Dorsolateral prefrontal cortex (tissue), 120 donors: ENCODE measurements at regions of chr5 and their contacts with region 1.

Region 1: DNA sequence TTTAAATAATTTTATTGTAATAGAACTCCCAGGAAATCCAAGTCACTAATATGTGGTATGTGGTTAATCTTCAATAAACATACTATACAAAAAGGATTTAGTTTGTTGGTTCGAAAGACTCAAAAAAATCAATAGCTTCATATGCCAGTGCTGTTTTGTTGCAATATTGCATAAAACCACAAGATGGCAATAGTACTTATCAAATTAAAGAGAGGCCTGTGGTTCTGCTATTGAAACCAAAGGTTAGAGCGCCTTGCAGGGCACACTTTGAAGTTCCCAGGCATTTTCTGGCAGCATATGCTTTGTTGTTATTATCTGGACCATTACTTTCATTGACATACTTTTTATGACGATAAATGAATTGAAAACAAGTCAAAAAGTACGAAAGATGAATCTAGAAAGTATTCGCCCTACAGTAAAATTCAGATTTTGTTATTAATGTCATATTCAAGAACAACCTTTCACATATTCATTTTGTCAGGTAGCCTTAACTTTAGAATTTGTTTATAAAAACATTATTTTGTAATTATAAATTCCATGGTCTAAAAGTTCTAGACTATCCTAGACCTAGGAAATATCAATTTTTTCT is 316.3 kb downstream of the MCTP1 start:
- DNase-seq: peak in 1 of 10 donors; percentile 23
- H3K4me3 ChIP-seq: no peak overlapping the region
- H3K27ac ChIP-seq: no peak overlapping the region
- H3K27me3 ChIP-seq: no peaks in the 10 kb centered on the region
- CTCF ChIP-seq: peak; percentile 63 to 93 (median 80)

Region 2: DNA sequence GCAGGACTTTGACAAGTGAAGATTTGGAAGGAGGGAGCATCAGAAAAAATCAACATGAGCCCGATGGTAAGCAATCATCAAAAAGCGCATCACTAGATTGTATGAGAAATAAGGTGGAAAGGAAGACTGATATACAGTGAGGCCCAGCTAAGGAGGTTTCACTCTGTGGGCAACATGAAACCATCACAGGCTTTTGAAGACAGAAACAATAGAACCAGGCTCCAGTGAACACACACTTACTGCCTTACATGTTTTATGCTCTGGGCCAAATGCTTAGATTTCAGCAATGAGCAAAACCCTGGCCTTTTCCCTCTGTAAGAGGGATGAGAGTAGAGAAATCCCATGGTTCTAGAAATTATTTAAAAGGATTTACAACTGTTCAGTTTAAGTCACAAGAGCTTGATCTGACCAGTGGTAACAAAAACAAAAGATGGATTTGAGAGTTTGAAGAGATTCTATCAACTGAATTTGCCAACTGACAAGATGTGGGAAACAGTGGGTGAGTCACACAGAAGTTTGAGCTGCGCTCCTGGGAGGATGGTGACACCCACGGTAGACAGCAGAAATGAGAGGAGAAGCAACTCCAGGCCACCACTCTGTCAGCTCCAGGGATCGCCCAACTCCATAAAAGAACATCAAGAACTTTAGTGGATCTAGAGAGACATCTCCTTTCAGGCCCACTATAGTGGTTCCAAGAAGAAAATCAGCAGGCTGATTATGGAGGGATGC is 54.5 kb after region 1 on chr5:
- intact Hi-C with region 1: no loop called
- DNase-seq: peak in 6 of 10 donors; percentile 6 to 63 (median 52)
- H3K4me3 ChIP-seq: no peak overlapping the region
- H3K27ac ChIP-seq: peak overlapping the region in 4 of 59 donors; percentile 8 to 15 (median 14)
- H3K27me3 ChIP-seq: no peaks in the 10 kb centered on the region
- CTCF ChIP-seq: no peak

Region 3: GRCh38 chr5:95238560-95239325 is 270.1 kb after region 1 on chr5:
- intact Hi-C with region 1: loop called in 1 of 2 experiments (anchors 10 kb)
- DNase-seq: peak in 1 of 10 donors; percentile 30
- H3K4me3 ChIP-seq: peak overlapping the region in 26 of 59 donors; percentile 6 to 48 (median 30)
- H3K27ac ChIP-seq: peak overlapping the region in 1 of 59 donors; percentile 37
- H3K27me3 ChIP-seq: peaks cover 0 to 3% (median 0%) of the 10 kb centered on the region in 45 donors
- CTCF ChIP-seq: peak in 48 of 56 donors; percentile 13 to 65 (median 43)

Region 4: DNA sequence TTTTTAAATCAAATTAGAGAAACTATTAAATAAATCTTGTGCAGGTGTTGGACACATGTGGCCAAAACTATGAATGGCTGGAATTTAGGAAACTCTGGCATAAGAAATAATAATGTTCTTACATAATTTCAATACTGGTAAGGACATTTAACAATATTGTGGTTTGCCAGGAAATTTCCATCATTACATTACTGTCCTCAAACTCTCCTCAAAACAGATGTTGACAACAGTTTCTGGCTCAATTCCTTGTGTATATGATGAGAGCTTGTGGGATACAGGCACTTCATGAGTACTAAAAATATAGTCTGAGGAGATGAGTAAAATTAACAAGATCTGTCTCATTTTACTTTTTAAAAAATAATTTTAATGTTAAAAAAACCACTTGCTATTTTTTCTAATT is 288.4 kb after region 1 on chr5:
- intact Hi-C with region 1: loop called in 1 of 2 experiments (anchors 5 kb)
- DNase-seq: no peak
- H3K4me3 ChIP-seq: no peak overlapping the region
- H3K27ac ChIP-seq: no peak overlapping the region
- H3K27me3 ChIP-seq: no peaks in the 10 kb centered on the region
- CTCF ChIP-seq: no peak